Right cardiac atrium (tissue), 5 donors: ENCODE measurements at regions of chr4 and their contacts with region 1.

Region 1: GRCh38 chr4:148412460-148412994 is 29.7 kb downstream of the NR3C2 start:
- DNase-seq: no peak
- ATAC-seq: no peak
- H3K4me3 ChIP-seq: no peak overlapping the region
- H3K27ac ChIP-seq: no peak overlapping the region
- H3K4me1 ChIP-seq: peaks cover 2% of the 10 kb centered on the region
- H3K27me3 ChIP-seq: no peaks in the 10 kb centered on the region

Region 2: DNA sequence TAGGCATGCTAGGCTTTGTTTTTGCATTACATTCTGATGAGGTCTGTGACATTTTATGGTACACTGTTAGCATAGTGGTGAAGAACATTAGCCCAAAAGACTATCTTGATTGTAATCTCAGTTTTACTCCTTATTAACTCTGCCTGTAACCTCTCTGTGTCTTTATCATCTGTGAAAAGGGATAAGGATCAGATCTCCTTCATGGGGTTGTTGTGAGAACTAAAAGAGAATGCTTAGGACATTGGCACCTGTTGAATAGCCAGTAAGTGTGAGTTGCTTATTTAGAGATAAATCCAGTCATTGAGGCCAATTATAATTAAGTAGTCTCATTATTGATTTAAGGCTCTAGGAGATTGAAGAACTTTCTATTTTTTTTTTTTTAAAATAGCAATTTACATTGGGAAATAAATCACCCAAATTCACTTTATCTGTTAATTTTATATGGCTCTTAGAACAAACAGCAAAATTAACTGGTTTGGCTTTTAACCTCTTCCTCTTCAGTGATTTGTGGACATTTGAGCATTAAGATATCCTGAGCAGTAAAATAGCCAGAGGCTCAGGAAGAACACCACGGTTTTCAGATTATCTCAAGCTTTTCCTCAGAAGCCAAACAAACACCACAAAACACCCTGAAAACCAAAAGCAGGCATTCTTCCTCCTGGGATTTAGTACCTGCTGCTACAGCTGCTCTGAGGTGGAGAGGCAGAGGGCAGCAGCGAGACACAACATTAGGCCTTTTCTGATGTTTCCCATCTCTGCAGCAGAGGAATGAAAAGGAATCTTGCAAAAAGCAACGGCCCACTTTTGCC is 487.7 kb before region 1 on chr4:
- intact Hi-C with region 1: no loop called
- DNase-seq: peak in 1 of 3 donors; percentile 49
- ATAC-seq: no peak
- H3K4me3 ChIP-seq: no peak overlapping the region
- H3K27ac ChIP-seq: no peak overlapping the region
- H3K4me1 ChIP-seq: peaks cover 4% of the 10 kb centered on the region
- H3K27me3 ChIP-seq: no peaks in the 10 kb centered on the region

Region 3: GRCh38 chr4:148299337-148299736 is 113.2 kb before region 1 on chr4:
- intact Hi-C with region 1: loop called in 1 of 4 experiments (anchors 5 kb)
- DNase-seq: no peak
- ATAC-seq: no peak
- H3K4me3 ChIP-seq: no peak overlapping the region
- H3K27ac ChIP-seq: no peak overlapping the region
- H3K4me1 ChIP-seq: peaks cover 2% of the 10 kb centered on the region
- H3K27me3 ChIP-seq: no peaks in the 10 kb centered on the region

Region 4: GRCh38 chr4:148530114-148530513 is 117.6 kb after region 1 on chr4:
- intact Hi-C with region 1: no loop called
- DNase-seq: no peak
- ATAC-seq: no peak
- H3K4me3 ChIP-seq: no peak overlapping the region
- H3K27ac ChIP-seq: no peak overlapping the region
- H3K4me1 ChIP-seq: no peaks in the 10 kb centered on the region
- H3K27me3 ChIP-seq: no peaks in the 10 kb centered on the region